Heart right ventricle (tissue), 16 donors: ENCODE measurements at regions of chrX and their contacts with region 1.

Region 1: DNA sequence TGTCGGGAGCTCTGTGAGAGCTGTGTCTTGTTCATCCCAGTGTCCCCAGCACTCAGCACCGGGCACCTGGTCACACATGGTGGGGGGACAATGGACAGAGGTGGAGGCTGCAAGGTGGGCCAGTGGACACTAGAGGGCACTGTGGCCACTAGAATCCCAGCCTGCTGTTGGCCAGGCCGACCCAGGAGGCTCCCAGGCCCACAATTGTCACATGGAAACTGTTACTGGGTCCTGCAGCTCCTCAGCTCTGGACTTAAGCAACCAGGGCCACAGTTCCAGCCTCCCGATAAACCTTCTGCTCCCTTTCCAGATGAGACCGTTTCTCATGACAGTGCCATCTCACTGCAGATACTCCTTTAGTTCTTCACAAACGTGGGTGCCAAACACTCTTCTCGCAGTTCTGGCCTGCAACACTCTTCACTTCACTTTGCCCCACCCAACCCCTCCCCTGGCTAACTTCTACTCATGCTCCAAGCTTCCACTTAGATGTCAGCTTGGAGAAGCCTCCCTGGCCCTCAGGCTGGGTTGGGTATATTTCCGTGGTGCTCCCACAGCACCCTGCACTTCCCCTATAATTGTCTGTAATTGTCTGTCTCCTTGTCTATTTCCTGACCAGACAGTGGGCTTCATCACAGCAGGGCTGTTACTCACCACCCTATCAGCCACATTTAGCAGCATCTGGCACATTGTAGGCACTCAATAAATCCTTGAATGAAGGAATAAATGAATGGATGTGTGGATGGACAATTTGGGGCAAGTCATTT is 3.5 kb upstream of the IQSEC2 start:
- DNase-seq: peak; percentile 40 to 54
- ATAC-seq: peak in 7 of 8 donors; percentile 28 to 46 (median 35)
- H3K4me3 ChIP-seq: no peak overlapping the region
- H3K27ac ChIP-seq: peak overlapping the region in 1 of 10 donors; percentile 22
- H3K4me1 ChIP-seq: peaks cover 8 to 60% (median 31%) of the 10 kb centered on the region in 9 donors
- H3K27me3 ChIP-seq: peaks cover 0 to 54% (median 0%) of the 10 kb centered on the region in 7 donors
- CTCF ChIP-seq: peak; percentile 52 to 90 (median 76)

Region 2: GRCh38 chrX:53433651-53434639 is 149.1 kb after region 1 on chrX and contains the start of gene HSD17B10:
- intact Hi-C with region 1: loop called in 4 of 10 experiments (anchors 10 kb)
- DNase-seq: peak; percentile 88 to 89
- ATAC-seq: peak; percentile 97 to 100 (median 99)
- H3K4me3 ChIP-seq: peak within 1 kb of the TSS; percentile 46 to 77 (median 64)
- H3K27ac ChIP-seq: peak within 1 kb of the TSS in 9 of 10 donors; percentile 53 to 83 (median 73)
- H3K4me1 ChIP-seq: peaks cover 0 to 16% (median 4%) of the 10 kb centered on the region in 9 donors
- H3K27me3 ChIP-seq: peaks cover 0 to 60% (median 0%) of the 10 kb centered on the region in 7 donors
- CTCF ChIP-seq: no peak
- total RNA-seq, gene HSD17B10: 43.9 to 126 (median 105) TPM

Region 3: DNA sequence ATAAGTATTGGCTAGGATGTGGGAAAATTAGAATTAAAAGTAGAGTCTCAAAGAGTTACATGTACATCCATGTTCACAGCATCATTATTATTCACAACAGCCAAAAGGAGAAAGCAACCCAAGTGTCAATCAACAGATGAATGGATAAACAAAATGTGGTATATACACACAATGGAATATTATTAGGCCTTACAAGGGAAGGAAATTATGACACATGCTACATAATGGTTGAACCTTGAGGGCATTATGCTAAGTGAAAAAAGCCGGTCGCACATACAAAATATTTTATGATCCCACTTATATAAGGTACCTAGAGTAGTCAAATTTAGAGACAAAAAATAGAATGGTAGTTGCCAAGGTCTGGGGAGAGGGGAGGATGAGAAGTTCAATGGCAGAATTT is 321.6 kb after region 1 on chrX:
- intact Hi-C with region 1: no loop called
- DNase-seq: no peak
- ATAC-seq: no peak
- H3K4me3 ChIP-seq: no peak overlapping the region
- H3K27ac ChIP-seq: no peak overlapping the region
- H3K4me1 ChIP-seq: no peaks in the 10 kb centered on the region
- H3K27me3 ChIP-seq: peaks cover 0 to 30% (median 0%) of the 10 kb centered on the region in 7 donors
- CTCF ChIP-seq: no peak